Endothelial cell of umbilical vein (primary cell): ENCODE measurements at regions of chr15 and their contacts with region 1.

Region 1: GRCh38 chr15:89416141-89416853 is 80.1 kb downstream of the RHCG start:
- DNase-seq: peak; percentile 71
- H3K4me3 ChIP-seq: no peak overlapping the region
- H3K27ac ChIP-seq: no peak overlapping the region
- H3K4me1 ChIP-seq: no peaks in the 10 kb centered on the region
- H3K27me3 ChIP-seq: peaks cover 48 to 61% of the 10 kb centered on the region in 2 experiments
- CTCF ChIP-seq: peak; percentile 88 to 98
- POLR2A ChIP-seq: no peak

Region 2: DNA sequence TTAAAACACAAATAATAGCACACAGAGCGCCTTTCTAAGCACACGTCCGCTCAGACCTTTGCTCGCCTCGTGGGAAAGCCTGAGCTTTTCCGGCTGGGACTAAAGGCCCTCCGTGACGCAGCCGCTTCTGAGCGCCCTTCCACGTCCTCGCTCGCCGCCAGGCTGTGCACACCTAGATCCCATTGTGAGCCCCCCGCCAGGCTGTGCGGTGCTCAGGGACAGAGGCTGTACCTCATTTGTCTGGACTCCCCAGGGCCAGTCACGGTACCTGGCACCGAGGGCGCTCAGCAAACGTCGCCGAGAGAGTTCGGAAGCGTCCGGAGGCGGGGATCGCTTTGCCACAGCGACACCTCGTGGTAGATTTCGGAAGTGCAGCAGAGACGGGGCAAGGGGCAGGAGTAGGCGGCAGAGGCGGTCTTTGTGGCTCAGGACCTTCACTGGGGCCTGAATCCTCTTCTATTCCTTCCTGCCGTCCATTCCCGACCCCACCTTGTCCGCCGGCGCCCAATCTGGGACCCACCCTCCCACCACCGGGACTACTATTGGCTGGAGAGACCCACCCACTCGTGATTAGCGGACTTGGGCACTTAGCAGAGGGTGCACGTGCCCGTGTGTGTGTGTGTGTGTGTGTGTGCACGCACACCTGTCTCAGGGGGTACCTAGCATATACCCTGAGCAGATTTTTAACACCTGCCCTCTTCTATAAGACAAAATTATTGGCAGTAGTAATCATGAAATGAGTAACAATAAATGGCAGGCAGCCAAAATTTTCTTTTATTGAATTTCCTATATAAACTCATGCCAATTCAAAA is 14.4 kb after region 1 on chr15:
- CTCF ChIA-PET with region 1: interaction called, 67 read pairs
- POLR2A ChIA-PET with region 1: no interaction called
- dilution Hi-C with region 1: no loop called
- intact Hi-C with region 1: loop called (anchors 1 kb)
- DNase-seq: peak; percentile 74
- H3K4me3 ChIP-seq: peak overlapping the region in 2 of 3 experiments; percentile 25 to 26
- H3K27ac ChIP-seq: no peak overlapping the region
- H3K4me1 ChIP-seq: peaks cover 3% of the 10 kb centered on the region
- H3K27me3 ChIP-seq: peaks cover 0 to 15% of the 10 kb centered on the region in 2 experiments
- CTCF ChIP-seq: peak; percentile 96 to 99
- POLR2A ChIP-seq: no peak

Region 3: DNA sequence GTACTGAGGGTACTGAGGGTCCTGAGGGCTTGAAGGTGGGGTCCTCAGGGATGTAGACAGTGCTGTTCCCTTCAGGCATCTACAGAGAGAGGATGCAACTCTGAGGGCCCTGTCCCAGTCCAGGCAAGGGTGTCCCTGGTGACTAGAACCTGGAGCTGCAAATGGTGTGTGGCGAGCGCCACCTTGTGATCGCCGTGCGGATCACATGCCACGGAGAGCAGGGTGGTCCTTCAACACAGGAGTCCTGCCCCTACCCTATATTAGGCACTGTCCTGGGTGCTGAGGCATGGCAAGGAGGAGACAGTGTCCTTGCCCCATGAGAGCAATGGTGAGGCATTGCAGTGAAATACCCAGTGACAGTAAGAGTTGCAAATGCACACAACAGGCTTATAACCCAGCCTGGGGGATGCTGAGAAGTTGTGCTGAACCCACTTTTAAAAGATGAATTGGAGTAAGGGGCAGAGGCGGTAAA is 56.5 kb after region 1 on chr15:
- CTCF ChIA-PET with region 1: interaction called, 29 read pairs
- POLR2A ChIA-PET with region 1: no interaction called
- dilution Hi-C with region 1: no loop called
- intact Hi-C with region 1: loop called (anchors 1 kb)
- DNase-seq: peak; percentile 67
- H3K4me3 ChIP-seq: no peak overlapping the region
- H3K27ac ChIP-seq: no peak overlapping the region
- H3K4me1 ChIP-seq: no peaks in the 10 kb centered on the region
- H3K27me3 ChIP-seq: peaks cover 13 to 19% of the 10 kb centered on the region in 2 experiments
- CTCF ChIP-seq: peak; percentile 81 to 93
- POLR2A ChIP-seq: no peak